ENCODE measurements at regions of chr14 and their contacts with region 1.

Region 1: GRCh38 chr14:75487155-75487671 is 35.1 kb upstream of the BATF start:
- DNase-seq: no peak
- H3K4me3 ChIP-seq: no peak overlapping the region
- H3K27ac ChIP-seq: no peak overlapping the region
- H3K4me1 ChIP-seq: no peaks in the 10 kb centered on the region
- H3K27me3 ChIP-seq: no peaks in the 10 kb centered on the region
- CTCF ChIP-seq: no peak
- EP300 ChIP-seq: no peak
- RAD21 ChIP-seq: no peak

Region 2: GRCh38 chr14:75293920-75294642 is 193.1 kb before region 1 on chr14:
- CTCF ChIA-PET with region 1: interaction called, 16 read pairs
- POLR2A ChIA-PET with region 1: no interaction called
- DNase-seq: peak; percentile 99
- H3K4me3 ChIP-seq: peak overlapping the region; percentile 72 to 84
- H3K27ac ChIP-seq: peak overlapping the region; percentile 72 to 98
- H3K4me1 ChIP-seq: peaks cover 0 to 13% of the 10 kb centered on the region in 2 experiments; a peak in 1 of 4 replicates
- H3K27me3 ChIP-seq: no peaks in the 10 kb centered on the region; the same call in 1 of the 2 replicates
- CTCF ChIP-seq: no peak
- EP300 ChIP-seq: 0 out of 4 replicates have a peak, but pooled peaks of 1 of the 2 experiments have one; percentile 21
- RAD21 ChIP-seq: 0 out of 2 replicates have a peak, but pooled peaks have one; percentile 6

Region 3: DNA sequence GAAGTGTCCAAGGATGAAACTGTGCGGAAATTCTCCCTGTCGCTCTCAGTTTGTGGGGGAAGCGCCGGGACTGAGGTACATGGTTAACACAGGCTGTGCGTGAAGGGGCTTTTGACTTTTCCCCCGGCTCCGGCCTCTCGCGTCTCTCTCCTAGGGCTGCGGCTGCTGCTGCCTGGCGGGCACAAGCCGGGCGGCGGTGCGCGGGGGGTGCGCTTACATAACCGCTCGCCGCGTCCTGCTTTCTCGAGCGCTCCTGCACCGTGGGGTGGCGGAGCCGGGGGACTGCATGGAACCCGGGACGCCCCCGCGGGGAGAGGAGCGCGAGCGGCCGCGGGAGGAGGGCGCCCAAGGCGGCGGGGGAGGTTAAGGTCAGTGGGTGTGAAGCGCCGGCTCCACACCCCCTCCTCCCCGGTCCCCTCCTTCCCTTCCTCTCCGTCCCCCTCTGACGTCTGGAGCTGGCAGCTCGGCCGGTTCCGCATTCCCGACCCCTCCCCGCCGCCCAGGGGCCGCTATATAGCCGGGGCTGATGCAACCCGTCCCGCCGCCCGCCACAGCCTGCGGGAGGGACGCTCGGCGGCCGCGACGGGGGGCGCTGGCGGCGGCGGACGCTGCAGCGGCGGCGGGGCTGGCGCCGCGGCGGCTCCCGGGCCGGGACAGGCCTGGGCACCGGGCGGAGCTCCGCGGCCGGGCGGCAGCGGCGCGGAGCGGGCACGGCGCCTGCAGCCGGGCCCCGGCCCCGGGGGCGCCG is 59.6 kb before region 1 on chr14 and contains the start of gene JDP2:
- CTCF ChIA-PET with region 1: interaction called, 10 read pairs
- POLR2A ChIA-PET with region 1: no interaction called
- DNase-seq: peak; percentile 93
- H3K4me3 ChIP-seq: peak within 1 kb of the TSS; percentile 68 to 80
- H3K27ac ChIP-seq: peak within 1 kb of the TSS; percentile 34 to 69; a peak in 2 of 4 replicates
- H3K4me1 ChIP-seq: peaks cover 7 to 37% of the 10 kb centered on the region in 2 experiments; a peak in 2 of 4 replicates
- H3K27me3 ChIP-seq: no peaks in the 10 kb centered on the region
- CTCF ChIP-seq: no peak
- EP300 ChIP-seq: no peak
- RAD21 ChIP-seq: no peak
- polyA plus RNA-seq, gene JDP2: 21.1 and 22.3 TPM in 2 replicates

Region 4: DNA sequence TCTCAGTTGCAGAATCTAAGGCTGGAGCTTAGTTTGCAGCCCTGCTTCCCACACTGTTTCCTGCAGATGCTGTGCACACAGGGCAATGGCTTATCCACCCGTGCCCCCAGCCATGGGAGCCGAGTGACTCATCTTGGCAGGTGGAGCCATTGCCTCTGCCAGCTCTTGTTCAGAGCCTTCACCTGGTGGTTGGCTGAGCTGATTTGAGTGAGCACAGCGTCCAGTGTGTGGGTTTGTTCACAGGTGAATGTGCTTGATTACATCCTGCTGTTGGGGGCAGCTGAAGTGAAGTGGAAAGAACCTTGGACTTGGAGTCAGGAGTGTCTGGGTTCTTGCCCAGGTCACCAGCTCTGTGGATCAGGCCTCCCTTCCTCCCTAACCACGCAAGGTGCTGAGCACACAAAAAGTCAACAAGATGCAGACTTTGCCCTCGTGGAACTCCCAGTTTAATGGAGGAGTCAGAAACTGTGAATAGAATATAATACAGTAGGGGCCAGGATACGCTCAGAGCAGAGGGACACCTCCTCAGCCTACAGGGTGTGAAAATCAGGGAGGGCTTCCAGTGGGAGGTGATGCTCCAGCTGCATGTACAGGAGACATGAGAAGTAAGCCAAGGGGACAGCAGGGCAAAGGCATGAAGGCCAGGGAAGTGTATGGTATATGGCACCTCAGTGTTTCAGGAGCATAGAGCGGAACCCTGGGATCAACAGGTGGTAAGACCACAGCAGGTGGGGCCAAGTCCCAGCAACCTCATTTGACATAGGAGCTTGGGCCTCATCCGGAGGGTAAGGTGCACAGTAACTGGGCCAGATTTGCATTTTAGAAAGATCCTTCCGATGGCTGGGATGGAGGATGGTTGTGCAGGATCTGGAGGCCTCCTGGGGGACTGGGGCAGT is 36.6 kb before region 1 on chr14:
- CTCF ChIA-PET with region 1: interaction called, 11 read pairs
- POLR2A ChIA-PET with region 1: no interaction called
- DNase-seq: no peak
- H3K4me3 ChIP-seq: no peak overlapping the region
- H3K27ac ChIP-seq: no peak overlapping the region
- H3K4me1 ChIP-seq: peaks cover 16 to 42% of the 10 kb centered on the region in 2 experiments; a peak in 2 of 4 replicates
- H3K27me3 ChIP-seq: no peaks in the 10 kb centered on the region
- CTCF ChIP-seq: no peak
- EP300 ChIP-seq: no peak
- RAD21 ChIP-seq: no peak

Region 5: DNA sequence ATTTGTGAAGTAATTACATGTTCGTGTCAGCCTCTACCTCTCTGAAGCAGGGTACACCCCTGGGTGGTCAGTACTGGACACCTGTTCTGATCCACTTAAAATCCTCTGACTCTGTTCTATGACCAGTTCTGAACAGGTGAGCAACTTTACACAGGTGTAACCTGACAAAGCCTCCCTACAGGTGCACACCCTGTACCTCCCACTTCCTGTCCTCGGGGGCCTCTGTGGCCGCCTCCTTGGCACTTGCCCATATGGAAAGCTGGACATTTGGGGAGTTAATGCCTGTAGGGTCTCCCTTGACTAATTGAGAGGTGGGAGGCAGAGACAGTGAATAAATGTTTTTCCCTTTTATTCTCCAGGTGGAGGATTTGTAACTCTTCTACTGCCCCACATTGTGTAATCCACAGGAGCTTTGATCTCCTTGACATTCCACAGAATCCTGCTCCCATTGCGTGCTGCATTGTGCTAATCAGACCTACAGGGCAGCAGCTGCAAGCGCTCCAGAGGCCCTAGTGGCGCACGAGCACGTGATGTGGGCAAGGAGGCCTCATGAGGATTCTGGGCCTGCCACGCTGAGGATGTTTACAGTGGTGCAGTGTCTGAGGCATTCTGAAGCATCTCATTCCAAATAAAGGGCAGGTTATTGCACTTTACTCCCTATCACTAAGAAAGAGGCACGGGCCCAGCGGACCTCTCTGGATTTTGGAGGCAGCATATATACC is 10.8 kb before region 1 on chr14:
- CTCF ChIA-PET with region 1: interaction called, 37 read pairs
- POLR2A ChIA-PET with region 1: no interaction called
- DNase-seq: no peak
- H3K4me3 ChIP-seq: no peak overlapping the region
- H3K27ac ChIP-seq: no peak overlapping the region
- H3K4me1 ChIP-seq: no peaks in the 10 kb centered on the region
- H3K27me3 ChIP-seq: no peaks in the 10 kb centered on the region
- CTCF ChIP-seq: no peak
- EP300 ChIP-seq: no peak
- RAD21 ChIP-seq: no peak

Region 6: GRCh38 chr14:75636100-75636692 is 149.0 kb after region 1 on chr14:
- CTCF ChIA-PET with region 1: no interaction called
- POLR2A ChIA-PET with region 1: no interaction called
- DNase-seq: peak; percentile 77
- H3K4me3 ChIP-seq: no peak overlapping the region
- H3K27ac ChIP-seq: peak overlapping the region in 1 of 2 experiments; percentile 94; a peak in 2 of 4 replicates
- H3K4me1 ChIP-seq: peaks cover 0 to 16% of the 10 kb centered on the region in 2 experiments; a peak in 2 of 4 replicates
- H3K27me3 ChIP-seq: peaks cover 4% of the 10 kb centered on the region; the same call in 1 of the 2 replicates
- CTCF ChIP-seq: no peak
- EP300 ChIP-seq: peak in 1 of 2 experiments; percentile 79; a peak in 2 of 4 replicates
- RAD21 ChIP-seq: no peak